MCF 10A (cell line): ENCODE measurements at regions of chr2 and their contacts with region 1.

Region 1: DNA sequence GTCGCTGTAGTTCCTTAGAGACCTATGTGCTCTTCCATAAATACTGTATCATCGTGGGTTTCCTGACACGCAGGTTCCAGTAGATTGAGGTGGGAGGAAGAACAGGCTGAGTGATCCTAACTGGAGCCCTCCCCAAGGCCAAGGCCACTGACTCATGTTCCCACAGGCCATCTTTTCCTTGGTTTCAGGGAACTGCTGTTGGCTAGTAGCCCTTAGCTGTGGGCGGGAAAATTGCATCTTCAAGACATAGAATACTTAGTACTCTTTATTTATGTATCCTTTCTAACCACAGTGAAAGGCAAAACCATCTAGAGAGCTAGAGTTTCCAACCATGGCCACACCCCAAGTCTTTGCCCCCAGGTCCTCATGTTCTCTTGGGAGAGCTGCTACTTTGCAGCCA is 55.9 kb downstream of the COPS8 start:
- DNase-seq: peak; percentile 94
- H3K4me3 Mint-ChIP-seq: peak overlapping the region; percentile 3
- H3K27ac Mint-ChIP-seq: peak overlapping the region; percentile 85
- H3K4me1 Mint-ChIP-seq: peaks cover 28% of the 10 kb centered on the region
- H3K27me3 Mint-ChIP-seq: no peaks in the 10 kb centered on the region
- CTCF ChIP-seq: no peak

Region 2: DNA sequence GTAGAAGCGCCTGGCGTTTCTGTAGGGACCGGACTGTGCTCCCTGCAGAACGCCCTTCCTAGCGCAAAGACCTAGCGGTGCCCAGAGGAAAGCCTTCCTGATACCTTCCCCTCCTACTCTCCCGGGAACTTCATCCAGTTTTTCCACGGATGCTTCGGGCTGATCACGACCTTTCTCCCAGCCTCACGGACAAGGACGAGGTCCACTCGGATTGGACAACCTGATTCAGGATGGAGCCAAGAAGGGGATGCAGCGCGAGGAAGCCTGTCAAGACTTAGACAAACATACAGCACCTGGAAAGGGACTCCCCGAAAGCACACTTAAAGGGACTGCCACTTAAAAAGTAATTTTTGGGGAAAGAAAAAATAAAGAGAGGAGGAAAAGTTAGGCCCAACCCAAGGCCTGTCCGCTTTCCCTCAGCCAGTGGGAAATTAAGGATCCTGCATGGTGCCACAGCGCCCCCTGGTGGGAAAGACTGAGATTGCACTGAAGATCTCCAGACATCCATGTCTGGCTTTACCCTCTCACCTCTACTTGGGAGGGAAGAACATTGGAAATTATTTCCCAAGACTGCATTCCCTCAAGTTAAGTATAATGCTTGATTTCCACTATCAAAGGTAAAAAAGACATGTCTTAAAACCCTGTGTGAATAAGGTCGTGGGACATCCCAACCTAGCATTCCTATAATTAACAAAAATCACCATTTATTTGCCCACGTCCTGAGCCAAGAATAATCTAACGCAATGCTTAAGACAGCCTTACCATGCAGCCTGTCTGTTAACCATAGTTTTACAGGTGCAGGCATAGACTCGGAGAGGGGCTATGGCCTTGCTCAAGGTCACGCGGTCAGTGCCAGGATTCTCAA is 69.3 kb before region 1 on chr2:
- CTCF ChIA-PET with region 1: no interaction called
- POLR2A ChIA-PET with region 1: no interaction called
- intact Hi-C with region 1: no loop called
- DNase-seq: peak; percentile 59
- H3K4me3 Mint-ChIP-seq: no peak overlapping the region
- H3K27ac Mint-ChIP-seq: no peak overlapping the region
- H3K4me1 Mint-ChIP-seq: peaks cover 8% of the 10 kb centered on the region
- H3K27me3 Mint-ChIP-seq: no peaks in the 10 kb centered on the region
- CTCF ChIP-seq: peak; percentile 91

Region 3: DNA sequence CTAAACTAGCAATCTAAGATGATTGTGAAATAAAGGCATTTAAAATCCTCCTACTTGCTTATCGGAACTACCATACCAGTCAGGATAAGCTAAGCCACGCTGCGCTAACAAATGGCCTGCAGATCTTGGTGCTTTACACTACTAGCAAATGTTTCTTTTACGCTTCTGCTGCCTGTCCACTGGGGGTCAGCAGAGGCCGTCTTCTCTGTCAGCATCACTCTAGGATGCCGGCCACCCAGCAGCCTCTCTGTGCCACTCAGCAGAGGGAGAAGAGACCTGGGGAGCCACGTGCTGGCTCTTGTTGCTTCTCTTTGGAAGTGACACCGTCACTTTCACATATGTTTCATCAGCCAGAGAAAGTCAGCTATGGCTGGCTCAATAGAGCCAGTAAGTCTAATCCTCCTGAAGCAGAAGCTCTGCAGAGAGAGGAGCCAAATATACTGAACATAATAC is 19.3 kb before region 1 on chr2:
- CTCF ChIA-PET with region 1: interaction called, 18 read pairs
- POLR2A ChIA-PET with region 1: interaction called, 18 read pairs
- intact Hi-C with region 1: no loop called
- DNase-seq: peak; percentile 82
- H3K4me3 Mint-ChIP-seq: no peak overlapping the region
- H3K27ac Mint-ChIP-seq: peak overlapping the region; percentile 82
- H3K4me1 Mint-ChIP-seq: peaks cover 25% of the 10 kb centered on the region
- H3K27me3 Mint-ChIP-seq: no peaks in the 10 kb centered on the region
- CTCF ChIP-seq: peak; percentile 80

Region 4: DNA sequence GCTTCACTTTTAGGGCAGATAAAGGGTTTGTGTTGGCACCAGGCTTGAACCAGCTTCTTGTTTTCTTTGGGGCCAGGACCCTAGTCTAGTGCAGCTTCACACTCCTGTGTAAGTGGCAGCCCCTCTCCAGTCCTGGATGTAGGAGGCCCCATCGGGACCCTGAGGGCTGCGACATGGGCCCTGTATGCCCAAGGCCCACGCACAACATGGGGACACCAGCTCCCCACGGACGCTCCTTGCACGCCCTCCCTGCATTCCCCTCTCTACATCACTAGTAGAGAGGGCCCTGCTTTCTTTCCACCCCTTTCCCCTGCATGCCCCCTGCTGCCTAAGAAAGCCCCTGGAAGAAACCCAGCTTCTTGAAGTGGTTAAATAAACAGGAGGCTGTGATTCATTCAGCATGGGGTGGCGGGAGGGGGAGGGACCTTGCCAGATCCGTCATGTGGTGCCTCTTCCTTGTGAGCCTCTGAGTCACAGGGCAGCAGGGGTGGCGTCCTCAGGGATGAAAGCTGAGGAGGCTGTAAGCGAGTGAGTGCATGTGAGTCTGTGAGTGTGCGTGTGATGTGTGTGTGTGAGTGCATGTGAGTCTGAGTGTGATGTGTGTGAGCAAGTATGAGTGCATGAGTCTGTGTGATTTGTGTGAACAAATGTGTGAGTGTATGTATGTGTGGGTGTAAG is 13.4 kb before region 1 on chr2:
- CTCF ChIA-PET with region 1: interaction called, 3 read pairs
- POLR2A ChIA-PET with region 1: interaction called, 28 read pairs
- intact Hi-C with region 1: no loop called
- DNase-seq: peak; percentile 98
- H3K4me3 Mint-ChIP-seq: no peak overlapping the region
- H3K27ac Mint-ChIP-seq: no peak overlapping the region
- H3K4me1 Mint-ChIP-seq: no peaks in the 10 kb centered on the region
- H3K27me3 Mint-ChIP-seq: no peaks in the 10 kb centered on the region
- CTCF ChIP-seq: no peak

Region 5: DNA sequence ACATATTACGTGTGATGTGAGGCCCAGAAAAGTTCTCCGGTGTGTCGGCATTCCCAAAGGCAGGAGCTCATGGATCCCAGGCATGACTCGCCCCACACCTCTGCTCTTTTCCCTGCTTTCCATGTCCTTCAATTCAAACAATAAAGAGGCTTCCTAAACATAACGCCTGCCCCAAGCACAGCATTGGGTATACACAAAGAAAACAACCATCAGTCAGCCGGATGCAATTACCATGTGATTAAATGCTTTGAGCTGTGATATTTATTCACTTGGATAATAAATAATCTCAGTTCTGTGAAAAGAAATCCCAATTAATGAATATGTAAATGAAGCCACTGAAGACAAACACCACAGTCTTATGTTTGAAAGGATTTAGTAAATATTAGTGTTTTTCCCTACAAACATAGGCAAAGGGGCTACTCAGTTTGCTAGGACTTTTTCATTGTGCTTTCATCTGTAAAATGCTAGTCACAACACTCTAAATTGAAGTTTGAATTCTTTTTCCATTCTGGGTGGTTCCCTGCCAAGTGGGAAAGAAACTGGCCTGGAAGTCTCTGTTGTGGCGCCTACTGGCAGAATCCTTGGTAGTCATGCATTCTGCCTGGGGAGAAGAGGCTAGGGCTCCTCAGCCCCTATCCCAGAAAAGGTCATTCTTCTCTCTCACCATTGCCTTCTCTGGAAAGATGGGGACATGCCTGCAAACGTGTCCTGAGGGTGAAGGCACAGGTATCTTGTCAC is 127.8 kb after region 1 on chr2:
- CTCF ChIA-PET with region 1: no interaction called
- POLR2A ChIA-PET with region 1: no interaction called
- intact Hi-C with region 1: no loop called
- DNase-seq: no peak
- H3K4me3 Mint-ChIP-seq: no peak overlapping the region
- H3K27ac Mint-ChIP-seq: no peak overlapping the region
- H3K4me1 Mint-ChIP-seq: peaks cover 4% of the 10 kb centered on the region
- H3K27me3 Mint-ChIP-seq: no peaks in the 10 kb centered on the region
- CTCF ChIP-seq: no peak

Region 6: DNA sequence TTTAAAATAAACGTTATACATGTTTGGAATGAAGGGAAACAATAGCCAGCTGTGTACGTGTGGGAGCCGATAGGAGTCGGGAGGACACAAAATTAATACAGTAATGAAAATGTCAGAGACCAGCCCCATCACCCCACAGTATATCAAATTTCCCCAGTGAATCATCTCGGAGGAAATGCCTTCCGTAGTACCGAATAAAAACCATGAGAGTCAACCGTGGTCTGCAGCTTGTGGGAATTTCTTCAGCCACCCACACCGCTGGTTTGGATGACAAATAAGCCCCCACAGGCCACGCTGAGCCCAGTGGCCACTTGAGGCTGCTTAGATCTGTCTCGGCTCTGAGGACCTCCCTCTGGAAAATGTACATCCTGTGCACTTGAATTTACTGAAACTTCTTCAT is 138.7 kb after region 1 on chr2:
- CTCF ChIA-PET with region 1: no interaction called
- POLR2A ChIA-PET with region 1: no interaction called
- intact Hi-C with region 1: no loop called
- DNase-seq: peak; percentile 54
- H3K4me3 Mint-ChIP-seq: no peak overlapping the region
- H3K27ac Mint-ChIP-seq: no peak overlapping the region
- H3K4me1 Mint-ChIP-seq: peaks cover 22% of the 10 kb centered on the region
- H3K27me3 Mint-ChIP-seq: no peaks in the 10 kb centered on the region
- CTCF ChIP-seq: no peak

Region 7: DNA sequence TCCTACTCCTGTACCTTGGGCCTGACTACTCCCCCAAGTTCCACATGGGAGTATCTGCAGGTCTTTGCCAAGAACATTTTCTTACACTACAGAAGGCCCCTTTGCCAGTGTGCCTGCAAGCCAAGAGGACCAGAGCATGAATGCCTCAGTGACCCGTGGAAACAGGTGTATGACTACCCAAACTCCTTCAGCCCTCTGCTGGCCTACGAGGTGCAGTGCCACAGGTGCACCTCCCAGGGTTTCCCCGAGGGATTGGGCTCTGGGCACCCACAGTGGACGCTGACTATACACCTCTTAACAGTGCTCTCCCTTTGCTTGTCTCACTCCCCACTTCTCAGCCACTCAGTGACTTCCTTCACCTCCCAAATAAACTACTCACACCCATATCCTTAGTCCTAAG is 181.0 kb after region 1 on chr2:
- CTCF ChIA-PET with region 1: no interaction called
- POLR2A ChIA-PET with region 1: no interaction called
- intact Hi-C with region 1: no loop called
- DNase-seq: peak; percentile 66
- H3K4me3 Mint-ChIP-seq: no peak overlapping the region
- H3K27ac Mint-ChIP-seq: no peak overlapping the region
- H3K4me1 Mint-ChIP-seq: peaks cover 16% of the 10 kb centered on the region
- H3K27me3 Mint-ChIP-seq: no peaks in the 10 kb centered on the region
- CTCF ChIP-seq: peak; percentile 40